Colonic mucosa (tissue), 4 donors: ENCODE measurements at regions of chr3 and their contacts with region 1.

Region 1: GRCh38 chr3:14461748-14462324 is 59.4 kb downstream of the SLC6A6 start:
- DNase-seq: peak; percentile 56
- H3K4me3 ChIP-seq: no peak overlapping the region
- H3K27ac ChIP-seq: no peak overlapping the region
- H3K4me1 ChIP-seq: no peaks in the 10 kb centered on the region
- H3K27me3 ChIP-seq: no peaks in the 10 kb centered on the region
- CTCF ChIP-seq: peak; percentile 47

Region 2: DNA sequence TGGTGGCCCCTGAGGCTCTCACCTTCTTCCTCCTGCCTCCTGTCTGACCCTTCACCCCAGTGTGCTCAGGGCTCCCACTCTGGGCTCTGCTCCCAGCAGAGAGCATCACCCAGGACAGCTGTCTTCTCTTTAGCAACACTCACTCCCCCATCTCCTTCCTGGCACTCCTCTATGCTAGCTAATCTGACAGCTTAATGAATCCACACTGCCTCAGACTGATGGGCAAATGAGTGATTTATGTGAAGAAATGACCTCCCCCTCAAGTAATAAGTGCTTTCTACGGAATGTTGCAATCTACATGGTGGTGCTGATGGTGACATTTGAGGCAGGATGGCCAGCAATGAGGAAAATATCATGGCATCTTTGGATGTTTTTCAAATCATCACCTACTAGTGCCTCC is 199.6 kb before region 1 on chr3:
- intact Hi-C with region 1: loop called (anchors 2 kb)
- DNase-seq: no peak
- H3K4me3 ChIP-seq: no peak overlapping the region
- H3K27ac ChIP-seq: no peak overlapping the region
- H3K4me1 ChIP-seq: no peaks in the 10 kb centered on the region
- H3K27me3 ChIP-seq: no peaks in the 10 kb centered on the region
- CTCF ChIP-seq: no peak

Region 3: DNA sequence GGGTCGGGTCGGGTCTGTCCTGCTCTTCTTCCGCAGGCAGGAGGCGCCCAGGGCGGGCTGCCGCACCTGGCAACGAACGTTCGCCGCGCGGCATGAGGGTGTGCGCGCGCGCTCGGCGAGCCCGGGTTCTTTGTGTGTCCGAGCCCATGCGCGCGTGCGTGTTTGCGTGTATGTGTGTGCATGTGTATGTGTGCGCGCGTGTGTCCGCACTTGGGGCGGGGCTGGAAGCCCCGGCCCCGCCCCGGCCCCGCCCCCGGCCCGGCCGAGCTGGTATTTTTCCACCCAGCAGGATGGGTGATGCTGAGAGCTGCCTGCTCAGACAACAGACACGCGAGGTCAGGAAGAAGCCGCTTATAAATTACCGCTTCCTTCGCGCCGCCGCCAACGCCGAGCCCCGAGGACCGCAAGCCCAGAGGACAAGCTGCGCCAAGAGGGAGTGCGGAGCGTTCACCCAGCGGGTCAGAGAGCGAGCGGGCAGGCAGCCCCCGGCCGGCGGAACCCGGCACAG is 59.5 kb before region 1 on chr3 and contains the start of gene SLC6A6:
- intact Hi-C with region 1: loop called (anchors 5 kb)
- DNase-seq: peak; percentile 96
- H3K4me3 ChIP-seq: peak within 1 kb of the TSS; percentile 74
- H3K27ac ChIP-seq: peak within 1 kb of the TSS; percentile 82
- H3K4me1 ChIP-seq: peaks cover 5% of the 10 kb centered on the region
- H3K27me3 ChIP-seq: no peaks in the 10 kb centered on the region
- CTCF ChIP-seq: peak; percentile 47
- total RNA-seq, gene SLC6A6: 7.2 to 13.0 TPM